ENCODE measurements at regions of chr10 and their contacts with region 1.

Region 1: GRCh38 chr10:63629363-63630084 is 108.3 kb downstream of the REEP3 start:
- DNase-seq: peak; percentile 91 to 97 (median 96)
- H3K4me3 ChIP-seq: peak overlapping the region; percentile 53 to 84 (median 75)
- H3K27ac ChIP-seq: peak overlapping the region; percentile 73 to 99 (median 95)
- H3K27me3 ChIP-seq: no peaks in the 10 kb centered on the region
- CTCF ChIP-seq: peak; percentile 42 to 89 (median 74)

Region 2: GRCh38 chr10:63166742-63167258 is 462.7 kb before region 1 on chr10:
- intact Hi-C with region 1: loop called (anchors 5 to 10 kb)
- DNase-seq: peak in 1 of 10 donors; percentile 16
- H3K4me3 ChIP-seq: no peak overlapping the region
- H3K27ac ChIP-seq: peak overlapping the region in 1 of 59 donors; percentile 15
- H3K27me3 ChIP-seq: no peaks in the 10 kb centered on the region
- CTCF ChIP-seq: peak; percentile 66 to 98 (median 86)

Region 3: DNA sequence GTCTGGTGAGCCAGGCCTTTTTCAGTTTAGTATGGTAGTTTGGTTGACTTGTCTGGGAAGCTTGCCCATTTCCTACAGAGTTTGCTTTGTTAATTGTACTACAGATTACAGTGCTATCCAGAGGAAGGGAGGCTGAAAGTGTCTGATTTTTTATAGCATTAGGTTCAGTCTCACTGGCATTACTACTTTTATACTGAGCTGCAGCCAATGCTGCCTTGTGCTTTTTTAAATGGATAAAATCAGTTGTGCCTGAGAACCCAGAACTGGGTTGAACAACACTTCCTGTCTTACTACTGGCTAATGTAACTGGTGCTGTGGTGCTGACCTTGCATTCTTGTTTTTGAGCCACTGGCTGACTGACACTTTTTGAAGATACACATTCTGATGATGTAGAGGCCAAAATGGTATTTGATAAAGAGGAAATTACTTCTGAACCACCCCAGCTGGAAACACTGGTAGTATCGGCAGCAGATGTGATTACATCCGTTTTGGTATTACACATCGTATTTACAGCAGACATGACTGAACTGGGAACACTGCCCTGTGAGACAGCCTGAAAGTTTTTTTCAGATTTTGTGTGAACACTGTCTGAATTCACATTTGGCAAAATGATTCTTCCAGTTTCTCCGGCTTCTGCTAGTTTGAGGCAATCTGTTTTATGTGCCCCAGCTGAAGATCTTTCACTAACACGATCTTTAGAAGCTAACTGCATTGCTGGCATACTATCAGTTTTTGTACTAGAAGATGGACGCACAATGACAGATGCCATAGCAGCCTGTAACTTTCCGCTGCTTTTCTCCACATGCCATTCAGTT is 422.3 kb before region 1 on chr10:
- intact Hi-C with region 1: loop called in 1 of 2 experiments (anchors 5 kb)
- DNase-seq: peak in 2 of 10 donors; percentile 22 to 47
- H3K4me3 ChIP-seq: peak overlapping the region in 51 of 59 donors; percentile 5 to 61 (median 30)
- H3K27ac ChIP-seq: peak overlapping the region; percentile 14 to 85 (median 71)
- H3K27me3 ChIP-seq: no peaks in the 10 kb centered on the region
- CTCF ChIP-seq: peak in 7 of 56 donors; percentile 7 to 19 (median 8)

Region 4: GRCh38 chr10:63268798-63269503 is 360.6 kb before region 1 on chr10:
- intact Hi-C with region 1: loop called (anchors 2 to 5 kb)
- DNase-seq: peak in 9 of 10 donors; percentile 53 to 88 (median 67)
- H3K4me3 ChIP-seq: peak overlapping the region; percentile 36 to 76 (median 60)
- H3K27ac ChIP-seq: peak overlapping the region; percentile 45 to 97 (median 92)
- H3K27me3 ChIP-seq: no peaks in the 10 kb centered on the region
- CTCF ChIP-seq: peak in 45 of 56 donors; percentile 10 to 61 (median 35)

Region 5: DNA sequence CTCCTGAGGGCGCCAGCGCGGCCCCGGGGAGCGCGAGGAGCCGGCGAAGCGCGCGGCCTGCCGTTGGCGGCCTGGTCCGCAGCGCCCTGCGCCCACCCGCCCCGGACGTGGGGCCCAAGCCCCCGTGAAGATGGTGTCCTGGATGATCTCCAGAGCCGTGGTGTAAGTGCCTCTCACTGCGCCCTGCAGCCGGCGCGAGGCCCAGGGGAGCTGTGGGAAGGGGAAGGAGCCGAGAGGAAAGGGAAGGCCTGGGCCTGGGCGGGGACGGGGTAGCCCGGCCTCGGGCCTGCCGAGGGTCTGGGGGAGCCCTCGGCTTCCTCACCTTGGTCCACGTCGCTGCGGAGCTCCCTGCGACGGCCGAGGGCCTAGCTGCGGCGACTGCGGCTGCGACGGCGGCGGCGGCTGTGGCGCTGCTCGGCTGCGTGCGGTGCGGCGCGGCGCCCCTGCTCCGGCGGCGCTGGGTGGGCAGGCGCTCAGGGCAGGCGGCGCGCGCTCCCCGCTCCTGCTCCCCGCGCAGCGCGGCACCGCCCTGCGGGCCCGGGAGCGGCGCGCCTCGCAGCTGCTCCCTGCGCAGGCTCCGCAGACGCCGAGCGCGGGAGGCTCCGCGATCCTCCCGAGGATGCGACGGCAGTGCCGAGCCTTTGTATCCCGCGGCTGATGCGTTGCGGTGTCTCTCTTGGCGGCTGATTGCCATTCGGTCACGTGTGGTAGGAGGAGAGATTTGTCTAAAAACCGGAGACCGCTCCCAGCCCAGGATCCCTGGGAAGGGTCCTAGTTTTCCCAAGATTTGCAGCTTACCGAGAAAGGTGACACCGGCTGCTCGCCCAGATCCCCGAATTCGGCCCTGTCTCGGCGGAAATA is 107.9 kb before region 1 on chr10:
- intact Hi-C with region 1: loop called (anchors 1 kb)
- DNase-seq: peak; percentile 57 to 82 (median 77)
- H3K4me3 ChIP-seq: peak overlapping the region; percentile 56 to 92 (median 79)
- H3K27ac ChIP-seq: peak overlapping the region; percentile 92 to 100 (median 98)
- H3K27me3 ChIP-seq: no peaks in the 10 kb centered on the region
- CTCF ChIP-seq: peak in 8 of 56 donors; percentile 5 to 31 (median 10)

Region 6: GRCh38 chr10:63720072-63720537 is 90.6 kb after region 1 on chr10:
- intact Hi-C with region 1: loop called in 1 of 2 experiments (anchors 5 kb)
- DNase-seq: peak in 2 of 10 donors; percentile 46 to 53
- H3K4me3 ChIP-seq: peak overlapping the region in 7 of 59 donors; percentile 3 to 50 (median 17)
- H3K27ac ChIP-seq: peak overlapping the region in 4 of 59 donors; percentile 0 to 57 (median 48)
- H3K27me3 ChIP-seq: no peaks in the 10 kb centered on the region
- CTCF ChIP-seq: peak; percentile 91 to 100 (median 98)

Measured in dorsolateral prefrontal cortex (tissue), 120 donors.